HAP-1 (cell line): ENCODE measurements at regions of chr3 and their contacts with region 1.

Region 1: DNA sequence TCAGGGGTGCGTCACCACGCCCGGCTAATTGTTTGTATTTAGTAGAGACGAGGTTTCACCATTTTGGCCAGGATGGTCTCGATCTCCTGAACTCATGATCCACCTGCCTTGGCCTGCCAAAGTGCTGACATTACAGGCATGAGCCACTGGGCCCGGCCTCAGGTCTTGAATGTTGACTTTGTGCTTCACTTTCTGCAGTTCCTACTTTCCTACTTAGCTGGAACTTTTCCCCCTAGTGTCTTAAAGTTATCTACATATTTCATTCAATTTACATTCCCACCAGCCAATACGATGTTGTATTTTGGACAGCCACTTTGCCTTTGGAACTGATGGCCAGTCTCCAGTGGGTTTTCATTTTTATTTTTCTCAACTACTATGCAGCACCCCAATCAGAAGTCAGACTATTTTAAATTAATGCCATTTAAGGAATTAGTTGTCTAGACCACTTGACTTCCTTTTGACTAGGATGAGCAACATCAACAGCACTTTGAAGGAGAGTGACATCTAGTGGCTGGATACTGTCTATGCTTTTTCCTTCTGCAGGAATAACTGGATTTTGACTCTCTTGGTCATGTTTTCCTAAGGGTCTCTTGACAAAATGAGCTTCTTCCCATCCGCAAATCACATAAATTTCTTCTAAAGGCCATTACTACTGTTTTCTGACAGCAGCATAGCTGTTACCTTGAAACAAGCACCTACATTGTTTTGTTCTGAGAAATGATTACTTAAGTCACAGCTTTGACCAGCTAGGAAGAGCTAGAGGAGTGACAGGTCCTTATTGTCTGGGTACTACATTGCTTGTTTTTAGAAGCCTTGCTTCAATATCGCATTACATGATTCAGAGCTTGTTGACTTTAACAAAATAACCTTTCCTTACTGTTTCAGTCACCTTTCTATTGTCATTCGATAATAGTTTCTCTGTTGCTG is 140.2 kb downstream of the ITPR1 start:
- DNase-seq: peak; percentile 12 to 76
- H3K4me3 ChIP-seq: no peak overlapping the region
- H3K4me1 ChIP-seq: no peaks in the 10 kb centered on the region
- H3K27me3 ChIP-seq: no peaks in the 10 kb centered on the region

Region 2: DNA sequence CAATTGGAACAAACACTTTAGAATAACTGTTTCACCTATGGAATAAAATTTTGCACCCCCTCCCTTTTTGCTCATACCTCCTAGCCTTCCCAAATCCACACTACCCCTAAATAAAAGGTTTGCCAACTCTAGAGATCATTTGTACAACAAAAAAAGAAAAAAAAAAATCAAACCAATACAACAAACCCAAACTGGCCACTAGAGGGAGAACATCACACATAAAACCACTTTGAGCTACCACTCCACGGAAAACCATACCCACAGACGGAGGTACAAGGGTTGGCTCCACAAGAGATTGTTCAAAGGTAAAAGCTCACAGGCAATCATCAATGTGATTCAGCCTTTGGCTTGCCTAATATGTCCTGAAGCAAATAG is 282.6 kb before region 1 on chr3:
- in situ Hi-C with region 1: loop called (anchors 10 kb)
- DNase-seq: peak; percentile 42 to 46
- H3K4me3 ChIP-seq: no peak overlapping the region
- H3K4me1 ChIP-seq: peaks cover 10% of the 10 kb centered on the region
- H3K27me3 ChIP-seq: no peaks in the 10 kb centered on the region

Region 3: GRCh38 chr3:4478261-4478660 is 155.1 kb before region 1 on chr3:
- in situ Hi-C with region 1: no loop called
- DNase-seq: no peak
- H3K4me3 ChIP-seq: no peak overlapping the region
- H3K4me1 ChIP-seq: no peaks in the 10 kb centered on the region
- H3K27me3 ChIP-seq: peaks cover 4% of the 10 kb centered on the region; the same call in 1 of the 2 replicates

Region 4: GRCh38 chr3:4524088-4525023 is 109.0 kb before region 1 on chr3:
- in situ Hi-C with region 1: no loop called
- DNase-seq: no peak
- H3K4me3 ChIP-seq: no peak overlapping the region
- H3K4me1 ChIP-seq: no peaks in the 10 kb centered on the region; the same call in none of the 2 replicates
- H3K27me3 ChIP-seq: no peaks in the 10 kb centered on the region